ENCODE measurements at regions of chr2 and their contacts with region 1.

Region 1: DNA sequence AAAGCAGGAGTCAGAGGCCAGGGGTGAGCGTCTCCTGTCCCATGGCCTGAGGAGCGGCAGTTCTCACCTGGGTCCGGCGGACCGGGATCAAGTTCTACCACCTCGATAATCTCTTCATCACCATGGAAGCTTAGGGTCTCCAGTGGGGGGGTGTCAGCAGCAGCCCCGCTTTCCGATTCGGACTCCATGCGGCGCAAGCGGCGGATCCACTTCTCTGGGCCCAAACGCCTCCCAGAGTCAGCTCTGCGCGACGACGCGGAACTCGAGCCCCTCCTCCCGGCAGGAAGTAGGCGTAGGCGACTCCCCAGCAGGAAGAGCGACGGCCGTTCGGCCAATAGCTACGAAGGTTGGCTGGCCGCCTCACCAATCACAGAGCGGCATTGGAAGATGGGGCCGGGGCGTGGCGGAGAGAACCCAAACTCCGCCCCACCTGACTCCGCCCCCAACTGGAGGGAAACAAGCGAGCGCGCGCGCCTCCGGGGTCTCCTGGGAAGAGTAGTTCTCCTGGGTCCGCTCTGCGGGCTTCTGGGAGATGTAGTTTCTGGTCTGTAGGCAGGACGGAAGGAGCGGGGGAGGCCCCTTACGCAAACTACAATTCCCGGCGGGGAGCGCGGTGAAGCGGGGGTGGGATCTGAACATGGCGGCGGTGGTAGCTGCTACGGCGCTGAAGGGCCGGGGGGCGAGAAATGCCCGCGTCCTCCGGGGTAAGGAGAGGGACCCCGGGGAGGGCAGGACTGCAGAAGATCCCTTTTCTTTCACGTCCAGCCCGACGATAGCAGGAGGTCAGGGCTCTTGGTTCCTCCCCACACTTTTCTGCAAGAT is at the starts of genes AAMP and PNKD:
- DNase-seq: peak; percentile 100
- H3K4me3 Mint-ChIP-seq: peak within 1 kb of the TSS; percentile 89
- H3K27ac Mint-ChIP-seq: peak within 1 kb of the TSS; percentile 87
- H3K4me1 Mint-ChIP-seq: peaks cover 38% of the 10 kb centered on the region
- H3K27me3 Mint-ChIP-seq: peaks cover 1% of the 10 kb centered on the region
- total RNA-seq, gene AAMP: 88.0 and 90.2 TPM in 2 replicates
- total RNA-seq, gene PNKD: 18.6 and 20.3 TPM in 2 replicates

Region 2: DNA sequence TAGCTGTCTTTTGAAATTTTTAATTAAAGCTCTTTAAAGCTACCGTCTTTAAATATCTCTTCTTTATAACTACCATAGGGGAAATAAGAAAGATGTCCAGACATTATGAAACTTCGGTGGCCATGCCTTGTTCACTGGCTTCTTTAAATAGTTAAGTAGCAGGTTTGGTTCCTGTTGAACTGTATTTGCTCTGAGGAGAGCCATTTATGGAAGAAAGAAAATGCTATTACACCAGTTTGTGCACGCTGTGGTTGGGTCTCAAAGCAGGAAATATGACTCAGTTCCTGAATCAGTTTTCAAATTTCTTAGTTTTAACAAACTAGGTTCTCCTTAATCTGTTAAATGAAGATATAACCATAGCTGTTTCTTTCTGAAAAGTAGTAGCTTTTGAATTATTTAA is 40.9 kb before region 1 on chr2:
- intact Hi-C with region 1: loop called (anchors 1 kb)
- DNase-seq: peak; percentile 57
- H3K4me3 Mint-ChIP-seq: peak overlapping the region; percentile 65
- H3K27ac Mint-ChIP-seq: peak overlapping the region; percentile 87
- H3K4me1 Mint-ChIP-seq: peaks cover 66% of the 10 kb centered on the region
- H3K27me3 Mint-ChIP-seq: no peaks in the 10 kb centered on the region

Region 3: GRCh38 chr2:218292048-218293014 is 22.2 kb after region 1 on chr2 and contains the start of gene TMBIM1:
- intact Hi-C with region 1: loop called (anchors 1 kb)
- DNase-seq: peak; percentile 79
- H3K4me3 Mint-ChIP-seq: peak within 1 kb of the TSS; percentile 88
- H3K27ac Mint-ChIP-seq: peak within 1 kb of the TSS; percentile 94
- H3K4me1 Mint-ChIP-seq: peaks cover 57% of the 10 kb centered on the region
- H3K27me3 Mint-ChIP-seq: no peaks in the 10 kb centered on the region
- total RNA-seq, gene TMBIM1: 66.2 and 70.5 TPM in 2 replicates

Region 4: DNA sequence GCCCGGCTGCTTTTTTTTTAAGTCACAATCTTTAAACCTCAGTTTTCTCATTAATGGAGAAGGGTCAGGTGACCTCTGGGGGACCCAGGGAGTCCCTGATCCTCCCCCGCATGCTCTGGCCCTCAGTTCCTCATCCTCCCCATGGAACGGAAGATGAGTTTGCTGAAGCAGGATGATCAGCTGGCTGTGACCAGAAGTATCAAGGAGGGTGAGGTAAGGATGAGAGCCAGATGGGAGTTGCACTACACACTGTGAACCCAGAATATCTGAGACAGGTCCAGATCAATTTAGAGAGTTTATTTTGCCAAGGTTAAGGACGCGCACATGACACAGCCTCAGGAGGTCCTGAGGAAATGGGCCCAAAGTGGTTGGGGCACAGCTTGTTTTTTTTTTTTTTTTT is 90.3 kb after region 1 on chr2:
- intact Hi-C with region 1: loop called (anchors 1 kb)
- DNase-seq: no peak
- H3K4me3 Mint-ChIP-seq: no peak overlapping the region
- H3K27ac Mint-ChIP-seq: no peak overlapping the region
- H3K4me1 Mint-ChIP-seq: no peaks in the 10 kb centered on the region
- H3K27me3 Mint-ChIP-seq: peaks cover 9% of the 10 kb centered on the region

Region 5: GRCh38 chr2:218648088-218648786 is 378.1 kb after region 1 on chr2:
- intact Hi-C with region 1: loop called (anchors 1 kb)
- DNase-seq: peak; percentile 27
- H3K4me3 Mint-ChIP-seq: no peak overlapping the region
- H3K27ac Mint-ChIP-seq: no peak overlapping the region
- H3K4me1 Mint-ChIP-seq: peaks cover 6% of the 10 kb centered on the region
- H3K27me3 Mint-ChIP-seq: no peaks in the 10 kb centered on the region

Region 6: DNA sequence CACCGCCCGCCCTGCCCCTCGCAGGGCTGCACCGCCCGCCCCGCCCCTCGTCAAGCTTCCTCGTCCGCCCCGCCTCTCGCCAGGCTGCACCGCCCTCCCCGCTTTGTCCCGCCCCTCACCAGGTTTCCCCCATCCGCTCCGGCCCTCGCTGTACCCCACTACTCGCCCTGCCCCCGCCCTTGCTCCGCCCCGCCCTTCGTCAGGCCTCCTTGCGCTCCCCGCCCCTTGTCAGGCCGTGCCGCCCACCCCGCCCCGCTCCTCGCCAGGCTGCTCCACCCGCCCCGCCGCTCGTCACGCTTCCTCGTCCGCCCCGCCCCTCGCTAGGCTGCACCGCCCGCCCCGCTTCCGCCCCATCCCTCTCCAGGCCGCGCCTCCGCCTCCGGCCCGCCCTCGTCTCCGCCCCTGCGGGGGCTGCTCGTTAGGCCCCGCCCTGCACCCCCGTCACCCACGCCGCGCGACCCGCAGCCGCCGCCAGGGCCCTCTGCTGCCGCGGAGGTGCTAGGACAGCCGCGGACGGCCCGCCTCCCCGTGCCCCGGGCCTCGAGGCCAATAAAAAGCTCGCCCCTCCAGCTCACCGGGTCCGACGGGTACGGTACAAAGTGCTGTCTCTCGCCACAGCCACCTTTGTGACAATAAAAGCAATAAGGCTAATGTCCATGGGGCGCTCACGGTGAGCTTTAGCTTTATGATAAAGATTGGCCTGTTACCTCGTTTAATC is 1118.2 kb after region 1 on chr2:
- intact Hi-C with region 1: loop called (anchors 1 kb)
- DNase-seq: peak; percentile 95
- H3K4me3 Mint-ChIP-seq: peak overlapping the region; percentile 97
- H3K27ac Mint-ChIP-seq: peak overlapping the region; percentile 67
- H3K4me1 Mint-ChIP-seq: peaks cover 6% of the 10 kb centered on the region
- H3K27me3 Mint-ChIP-seq: peaks cover 23% of the 10 kb centered on the region